Posterior cingulate gyrus (tissue), 11 donors: ENCODE measurements at regions of chr3 and their contacts with region 1.

Region 1: DNA sequence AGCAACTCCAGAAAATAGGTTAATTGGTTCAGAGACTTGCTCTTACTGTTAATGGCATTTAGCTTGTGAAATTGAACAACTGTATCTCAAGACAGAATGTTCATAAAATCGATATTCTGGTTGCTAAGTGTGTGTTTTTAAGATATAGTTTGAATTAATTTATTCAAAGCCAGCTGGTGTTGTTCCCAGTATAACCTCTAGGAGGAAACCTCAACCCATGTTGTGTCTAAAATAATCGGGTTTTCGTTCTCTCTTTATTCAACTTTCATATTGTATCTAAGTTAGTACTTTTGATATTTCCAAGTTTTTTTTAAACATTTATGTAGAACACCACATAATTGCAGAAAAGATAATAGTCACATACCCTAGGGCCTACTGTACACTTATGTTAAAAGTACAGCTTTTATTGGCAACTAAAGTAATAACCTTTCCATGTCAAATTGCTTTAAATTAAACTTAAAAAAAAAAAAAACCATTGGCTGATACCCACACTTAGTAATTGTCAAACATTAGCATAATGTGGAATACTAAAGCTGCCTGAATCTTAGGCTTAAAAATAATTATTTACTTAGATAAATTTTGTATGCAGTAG is 90.9 kb downstream of the SAMMSON start:
- DNase-seq: no peak

Region 2: DNA sequence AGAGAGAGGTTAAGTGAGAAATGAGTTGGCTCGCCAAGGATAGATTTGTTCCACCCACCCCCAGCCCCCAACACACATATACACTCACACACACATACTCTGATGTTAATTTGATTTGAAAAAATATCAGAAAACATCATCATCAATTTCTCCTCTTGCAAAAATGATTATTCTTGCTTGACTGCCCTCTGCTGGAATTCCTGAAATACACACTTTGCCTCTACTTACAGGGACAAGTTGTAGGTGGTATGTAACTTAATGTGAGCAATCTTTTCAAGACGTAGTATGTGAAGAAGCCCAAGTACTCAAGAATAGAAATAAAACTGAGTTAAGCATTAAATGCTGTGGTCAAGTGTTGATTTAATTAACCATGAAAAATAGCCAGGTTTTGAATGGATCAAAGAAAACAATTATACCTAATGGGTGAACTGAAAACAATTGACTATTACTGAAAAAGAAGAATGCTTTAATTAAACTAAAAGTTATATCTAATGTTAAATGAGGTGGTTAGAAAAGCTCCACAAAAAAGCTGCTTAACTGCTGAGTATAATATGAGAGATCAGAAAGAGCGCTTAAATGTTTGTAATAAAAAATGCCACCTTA is 268.7 kb after region 1 on chr3:
- intact Hi-C with region 1: loop called (anchors 1 kb)
- DNase-seq: peak in 2 of 10 donors; percentile 3 to 26